ENCODE measurements at regions of chr1 and their contacts with region 1.

Region 1: GRCh38 chr1:180188091-180188506 is 33.4 kb downstream of the QSOX1 start:
- DNase-seq: peak in 2 of 5 donors; percentile 50 to 56
- H3K4me3 ChIP-seq: no peak overlapping the region
- H3K27ac ChIP-seq: no peak overlapping the region
- H3K4me1 ChIP-seq: no peaks in the 10 kb centered on the region
- H3K27me3 ChIP-seq: no peaks in the 10 kb centered on the region
- CTCF ChIP-seq: peak in 1 of 3 donors; percentile 10
- EP300 ChIP-seq: no peak
- POLR2A ChIP-seq: no peak

Region 2: DNA sequence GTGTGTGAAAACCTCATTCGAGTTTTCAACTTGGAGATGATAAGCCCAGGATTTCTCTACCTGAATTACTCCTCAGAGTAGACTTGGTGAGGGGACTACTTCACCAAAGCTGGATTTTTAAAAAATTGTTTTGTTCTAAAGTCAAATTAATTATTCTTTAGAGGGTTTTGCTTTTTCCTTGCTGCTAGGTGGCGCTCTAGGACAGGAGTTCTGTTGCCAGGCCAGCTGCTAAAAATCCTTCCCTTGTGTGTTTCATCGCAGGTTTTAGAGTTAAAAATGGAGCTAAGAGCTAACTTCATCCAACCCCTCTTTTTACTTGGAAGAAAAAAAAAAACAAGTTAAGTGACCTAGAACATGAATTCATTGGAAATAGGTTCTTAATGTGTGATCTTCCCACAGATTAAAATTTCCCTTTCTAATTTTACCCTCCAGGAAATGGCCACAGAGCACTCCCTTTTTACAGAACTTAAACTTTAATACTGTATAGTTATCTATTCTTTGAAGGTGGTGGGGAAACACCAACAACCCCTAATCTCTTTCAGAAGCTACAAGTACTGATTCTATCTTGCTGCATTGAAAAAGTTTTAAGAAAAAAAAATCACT is 481.7 kb before region 1 on chr1:
- intact Hi-C with region 1: loop called in 2 of 4 experiments (anchors 10 kb)
- DNase-seq: peak; percentile 52 to 69 (median 60)
- H3K4me3 ChIP-seq: no peak overlapping the region
- H3K27ac ChIP-seq: no peak overlapping the region
- H3K4me1 ChIP-seq: no peaks in the 10 kb centered on the region
- H3K27me3 ChIP-seq: no peaks in the 10 kb centered on the region
- CTCF ChIP-seq: peak; percentile 22 to 76 (median 61)
- EP300 ChIP-seq: no peak
- POLR2A ChIP-seq: no peak

Region 3: GRCh38 chr1:180070286-180070685 is 117.8 kb before region 1 on chr1:
- intact Hi-C with region 1: loop called in 1 of 4 experiments (anchors 10 kb)
- DNase-seq: no peak
- H3K4me3 ChIP-seq: no peak overlapping the region
- H3K27ac ChIP-seq: no peak overlapping the region
- H3K4me1 ChIP-seq: no peaks in the 10 kb centered on the region
- H3K27me3 ChIP-seq: no peaks in the 10 kb centered on the region
- CTCF ChIP-seq: no peak
- EP300 ChIP-seq: no peak
- POLR2A ChIP-seq: no peak

Region 4: DNA sequence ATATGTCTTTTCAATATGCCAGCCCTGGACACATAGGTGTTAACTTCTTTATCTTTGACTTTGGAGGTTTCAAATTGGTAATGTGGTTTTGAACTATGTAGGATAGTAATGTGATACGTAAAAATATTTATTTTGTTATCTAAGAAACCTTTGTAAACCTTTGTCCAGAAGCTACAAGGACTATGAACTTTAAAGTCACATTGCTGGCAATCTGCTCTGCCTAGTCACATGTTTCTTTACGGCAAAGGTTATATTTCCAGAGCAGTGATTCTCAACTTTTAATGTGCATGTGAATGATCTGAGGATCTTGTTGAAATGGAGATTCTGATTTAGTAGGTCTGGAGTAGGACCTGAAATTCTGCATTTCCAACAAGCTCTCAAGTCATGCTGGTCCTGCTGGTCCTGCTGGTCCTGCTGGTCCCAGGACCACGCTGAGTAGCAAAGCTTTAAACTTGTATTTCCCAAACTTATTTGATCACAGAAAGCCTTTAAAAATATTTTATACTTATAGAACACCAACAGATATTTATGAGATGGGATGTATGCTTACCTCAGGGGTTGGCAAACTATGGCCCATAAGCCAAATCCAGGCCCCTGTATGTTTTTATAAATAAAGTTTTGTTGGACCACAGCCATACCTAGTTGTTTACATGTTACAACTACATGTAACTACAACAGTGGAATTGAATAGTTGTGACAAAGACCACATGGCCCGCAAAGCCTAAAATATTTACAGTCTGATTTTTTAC is 91.3 kb before region 1 on chr1:
- intact Hi-C with region 1: no loop called
- DNase-seq: no peak
- H3K4me3 ChIP-seq: no peak overlapping the region
- H3K27ac ChIP-seq: no peak overlapping the region
- H3K4me1 ChIP-seq: peaks cover 2% of the 10 kb centered on the region
- H3K27me3 ChIP-seq: no peaks in the 10 kb centered on the region
- CTCF ChIP-seq: no peak
- EP300 ChIP-seq: no peak
- POLR2A ChIP-seq: no peak

Region 5: DNA sequence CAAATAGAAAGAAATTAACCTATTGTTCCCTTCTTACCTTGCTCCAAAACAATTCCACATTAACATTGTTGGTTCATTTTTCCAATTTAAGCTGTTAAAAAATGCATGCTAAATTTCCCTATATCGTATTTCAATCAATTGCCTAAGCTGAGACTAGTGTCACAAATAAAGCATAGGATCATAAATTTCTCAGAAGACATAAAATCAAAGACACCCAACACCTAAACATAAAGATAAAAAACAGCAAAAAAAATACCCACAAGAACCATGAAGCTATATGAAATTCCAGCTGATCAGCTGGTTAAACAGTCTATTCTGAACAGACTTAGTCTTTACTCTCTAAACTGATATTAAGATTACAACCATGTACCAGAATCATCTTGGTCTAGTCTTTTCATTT is 281.9 kb after region 1 on chr1:
- intact Hi-C with region 1: loop called in 1 of 4 experiments (anchors 10 kb)
- DNase-seq: no peak
- H3K4me3 ChIP-seq: no peak overlapping the region
- H3K27ac ChIP-seq: no peak overlapping the region
- H3K4me1 ChIP-seq: no peaks in the 10 kb centered on the region
- H3K27me3 ChIP-seq: no peaks in the 10 kb centered on the region
- CTCF ChIP-seq: no peak
- EP300 ChIP-seq: no peak
- POLR2A ChIP-seq: no peak

Measured in ovary (tissue), 10 donors.